ENCODE measurements at regions of chr12 and their contacts with region 1.

Region 1: GRCh38 chr12:1939801-1940607 is 21.6 kb upstream of the CACNA2D4 start:
- ATAC-seq: peak; percentile 86 to 98 (median 95)
- H3K4me3 ChIP-seq: no peak overlapping the region
- H3K27ac ChIP-seq: no peak overlapping the region
- H3K4me1 ChIP-seq: peaks cover 5 to 15% of the 10 kb centered on the region in 2 donors

Region 2: GRCh38 chr12:1634590-1635191 is 305.3 kb before region 1 on chr12:
- in situ Hi-C with region 1: loop called in 3 of 9 experiments (anchors 25 kb)
- ATAC-seq: peak in 6 of 8 experiments; percentile 36 to 74 (median 49)
- H3K4me3 ChIP-seq: no peak overlapping the region
- H3K27ac ChIP-seq: no peak overlapping the region
- H3K4me1 ChIP-seq: peaks cover 21 to 25% of the 10 kb centered on the region in 2 donors

Region 3: DNA sequence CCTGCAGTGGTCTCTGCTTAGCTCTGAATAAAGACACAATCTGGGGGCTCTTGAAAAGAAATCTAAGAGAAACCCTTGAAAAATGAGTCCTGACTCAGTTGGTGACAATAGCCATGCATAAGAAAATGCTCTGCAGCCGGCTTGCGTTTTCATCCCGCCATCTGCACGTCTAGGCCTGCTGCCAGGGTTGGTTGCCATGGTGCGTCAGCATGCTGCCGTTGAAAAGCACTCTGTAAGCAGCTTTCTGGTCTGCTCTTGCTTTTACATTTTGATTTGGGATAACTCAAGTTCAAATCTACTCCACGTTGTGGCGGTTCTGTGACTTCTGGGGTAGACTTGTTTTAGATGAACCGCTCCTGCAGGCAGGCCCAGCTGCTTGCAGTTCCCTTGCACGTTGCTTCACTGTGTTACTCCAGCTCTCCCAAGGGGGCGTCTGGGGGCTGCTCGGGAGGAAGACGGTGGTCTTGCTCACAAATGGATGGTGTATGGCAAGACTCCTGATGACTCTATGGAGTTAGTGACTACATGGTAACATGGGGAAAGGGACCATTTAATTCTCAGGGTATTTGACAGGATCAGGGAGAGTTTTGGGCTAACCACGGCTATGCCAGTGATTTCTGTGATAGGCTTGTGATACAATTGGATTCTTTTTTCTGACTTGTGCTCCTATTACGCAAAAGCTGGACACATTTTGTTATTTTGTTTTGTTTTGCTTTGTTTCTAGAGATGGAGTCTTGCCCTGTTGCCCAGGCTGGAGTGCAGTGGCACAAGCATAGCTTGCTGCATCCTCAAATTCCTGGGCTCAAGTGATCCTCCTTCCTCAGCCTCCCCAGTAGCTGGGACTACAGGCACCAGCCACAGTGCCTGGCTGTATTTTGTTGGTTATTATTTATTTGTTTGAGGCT is 295.2 kb before region 1 on chr12:
- in situ Hi-C with region 1: loop called in 4 of 9 experiments (anchors 10 to 25 kb)
- ATAC-seq: peak; percentile 84 to 96 (median 90)
- H3K4me3 ChIP-seq: no peak overlapping the region
- H3K27ac ChIP-seq: peak overlapping the region; percentile 12 to 86
- H3K4me1 ChIP-seq: peaks cover 12 to 22% of the 10 kb centered on the region in 2 donors

Region 4: GRCh38 chr12:1650260-1650977 is 289.6 kb before region 1 on chr12:
- in situ Hi-C with region 1: loop called in 8 of 9 experiments (anchors 10 to 25 kb)
- ATAC-seq: peak in 4 of 8 experiments; percentile 27 to 87 (median 68)
- H3K4me3 ChIP-seq: no peak overlapping the region
- H3K27ac ChIP-seq: no peak overlapping the region
- H3K4me1 ChIP-seq: peaks cover 0 to 6% of the 10 kb centered on the region in 2 donors

Region 5: GRCh38 chr12:1661553-1662335 is 278.3 kb before region 1 on chr12:
- in situ Hi-C with region 1: loop called in 4 of 9 experiments (anchors 10 to 25 kb)
- ATAC-seq: peak; percentile 94 to 96 (median 95)
- H3K4me3 ChIP-seq: peak overlapping the region; percentile 40 to 60 (median 42)
- H3K27ac ChIP-seq: no peak overlapping the region
- H3K4me1 ChIP-seq: peaks cover 1 to 4% of the 10 kb centered on the region in 2 donors

Region 6: DNA sequence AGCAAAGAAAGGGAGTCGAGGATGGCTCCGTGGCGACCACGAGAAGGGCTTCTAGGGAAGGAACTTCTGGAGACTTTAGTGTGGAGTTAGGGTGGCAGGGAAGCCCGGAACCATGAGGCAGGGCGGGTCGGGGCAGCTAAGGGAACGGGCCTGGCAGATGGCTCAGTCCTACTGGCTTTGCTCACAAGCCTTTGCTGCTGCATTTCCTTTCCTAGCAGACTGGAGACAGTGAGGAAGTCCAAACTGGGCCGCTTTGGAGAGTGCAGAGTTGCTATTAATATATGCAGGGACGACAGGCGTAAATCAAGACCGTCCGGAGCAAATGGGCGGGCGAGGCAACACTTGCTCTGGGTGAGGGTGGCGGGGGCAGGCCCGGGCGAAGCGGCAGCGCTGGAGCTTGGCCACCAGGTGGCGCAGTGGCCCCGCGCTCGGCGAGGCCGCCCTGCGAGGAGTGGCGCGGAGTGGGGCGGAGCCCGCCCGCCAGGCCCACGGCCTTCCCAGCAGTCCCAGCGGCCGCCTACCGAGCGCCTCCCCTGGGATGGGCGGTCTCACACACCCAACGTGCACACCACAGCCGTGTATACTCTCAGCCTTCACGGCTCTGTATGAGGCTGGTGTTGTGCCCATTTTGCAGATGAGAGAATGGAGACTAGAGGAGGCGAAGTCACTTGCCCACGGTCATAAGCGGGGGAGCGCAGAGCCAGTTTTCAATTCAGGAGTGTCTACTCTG is 144.1 kb before region 1 on chr12:
- in situ Hi-C with region 1: loop called in 8 of 9 experiments (anchors 5 to 25 kb)
- ATAC-seq: peak; percentile 75 to 93 (median 86)
- H3K4me3 ChIP-seq: peak overlapping the region in 4 of 5 donors; percentile 2 to 19 (median 14)
- H3K27ac ChIP-seq: no peak overlapping the region
- H3K4me1 ChIP-seq: peaks cover 9 to 17% of the 10 kb centered on the region in 2 donors

Region 7: GRCh38 chr12:1804545-1805332 is 135.3 kb before region 1 on chr12:
- in situ Hi-C with region 1: loop called in 7 of 9 experiments (anchors 10 to 25 kb)
- ATAC-seq: peak; percentile 48 to 95 (median 72)
- H3K4me3 ChIP-seq: no peak overlapping the region
- H3K27ac ChIP-seq: no peak overlapping the region
- H3K4me1 ChIP-seq: peaks cover 20 to 23% of the 10 kb centered on the region in 2 donors